Activated naive CD4-positive, alpha-beta T cell treated with anti-CD3 and anti-CD28 coated beads for 36 hours (primary cell): ENCODE measurements at regions of chr1 and their contacts with region 1.

Region 1: GRCh38 chr1:109877320-109877771 is 33.3 kb upstream of the CSF1 start:
- DNase-seq: no peak
- H3K4me3 Mint-ChIP-seq: no peak overlapping the region
- H3K27ac Mint-ChIP-seq: no peak overlapping the region
- H3K4me1 Mint-ChIP-seq: peaks cover 8% of the 10 kb centered on the region
- H3K27me3 Mint-ChIP-seq: no peaks in the 10 kb centered on the region

Region 2: GRCh38 chr1:109827466-109827865 is 49.9 kb before region 1 on chr1:
- CTCF ChIA-PET with region 1: no interaction called
- intact Hi-C with region 1: loop called (anchors 5 kb)
- DNase-seq: no peak
- H3K4me3 Mint-ChIP-seq: no peak overlapping the region
- H3K27ac Mint-ChIP-seq: no peak overlapping the region
- H3K4me1 Mint-ChIP-seq: peaks cover 10% of the 10 kb centered on the region
- H3K27me3 Mint-ChIP-seq: no peaks in the 10 kb centered on the region

Region 3: DNA sequence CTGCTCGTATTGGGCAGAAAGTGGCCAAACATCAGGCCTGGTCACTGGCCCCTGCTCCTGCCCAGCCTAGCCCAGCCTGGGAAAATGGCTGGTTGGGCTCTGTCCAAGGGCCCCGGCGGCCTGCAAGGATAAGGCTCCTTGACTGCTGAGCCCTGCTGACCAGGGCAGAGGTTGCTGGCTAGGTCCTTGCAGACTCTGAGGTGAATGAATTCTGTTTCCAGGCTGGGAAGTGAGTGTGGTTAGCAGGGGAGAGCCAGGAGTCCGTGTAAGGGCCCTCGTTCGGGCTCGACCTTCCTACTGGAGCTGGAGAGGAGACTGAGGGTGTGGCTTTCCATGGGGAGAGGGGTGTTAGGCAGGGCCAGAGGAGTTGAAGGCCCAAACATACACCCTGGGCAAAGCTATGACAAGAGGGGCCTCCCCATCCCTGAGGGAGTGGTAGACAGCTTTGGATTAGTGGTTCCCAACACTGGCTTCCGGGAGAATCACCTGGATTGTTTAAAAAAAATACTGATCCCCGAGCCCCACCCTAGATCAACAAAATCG is 53.9 kb after region 1 on chr1:
- CTCF ChIA-PET with region 1: no interaction called
- intact Hi-C with region 1: no loop called
- DNase-seq: no peak
- H3K4me3 Mint-ChIP-seq: no peak overlapping the region
- H3K27ac Mint-ChIP-seq: no peak overlapping the region
- H3K4me1 Mint-ChIP-seq: peaks cover 2% of the 10 kb centered on the region
- H3K27me3 Mint-ChIP-seq: no peaks in the 10 kb centered on the region